Caco-2 (cell line): ENCODE measurements at regions of chr22 and their contacts with region 1.

Region 1: GRCh38 chr22:30205281-30206115 is 41.1 kb downstream of the LIF start:
- DNase-seq: peak; percentile 43 to 48
- H3K4me3 ChIP-seq: no peak overlapping the region
- H3K4me3 Mint-ChIP-seq: no peak overlapping the region
- H3K27ac Mint-ChIP-seq: peak overlapping the region; percentile 97
- H3K4me1 ChIP-seq: peaks cover 56% of the 10 kb centered on the region
- H3K4me1 Mint-ChIP-seq: peaks cover 45% of the 10 kb centered on the region
- H3K27me3 ChIP-seq: no peaks in the 10 kb centered on the region
- H3K27me3 Mint-ChIP-seq: no peaks in the 10 kb centered on the region
- CTCF ChIP-seq: no peak

Region 2: DNA sequence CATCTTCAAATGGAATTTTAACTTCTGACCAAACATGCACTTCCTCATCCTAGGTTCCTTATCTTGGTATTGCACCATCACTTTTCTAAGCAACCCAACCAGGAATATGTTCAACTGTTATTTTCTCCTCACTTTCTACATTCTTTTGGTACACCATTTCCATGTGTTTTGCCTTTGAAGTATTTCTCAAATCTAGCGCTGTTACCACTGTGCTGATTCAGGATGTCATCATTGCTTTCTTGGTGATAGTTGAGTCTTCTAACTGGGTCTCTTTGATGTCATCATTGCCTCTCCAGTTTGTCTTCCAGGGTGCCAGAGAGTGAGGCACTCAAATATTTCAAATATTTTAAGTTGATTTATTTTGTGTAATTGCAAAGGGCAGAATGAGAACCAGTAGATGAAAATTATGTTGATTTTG is 77.7 kb before region 1 on chr22:
- CTCF ChIA-PET with region 1: no interaction called
- POLR2A ChIA-PET with region 1: no interaction called
- intact Hi-C with region 1: loop called (anchors 1 kb)
- DNase-seq: peak in 1 of 2 experiments; percentile 27
- H3K4me3 ChIP-seq: no peak overlapping the region
- H3K4me3 Mint-ChIP-seq: no peak overlapping the region
- H3K27ac Mint-ChIP-seq: no peak overlapping the region
- H3K4me1 ChIP-seq: peaks cover 10% of the 10 kb centered on the region
- H3K4me1 Mint-ChIP-seq: no peaks in the 10 kb centered on the region
- H3K27me3 ChIP-seq: no peaks in the 10 kb centered on the region
- H3K27me3 Mint-ChIP-seq: no peaks in the 10 kb centered on the region
- CTCF ChIP-seq: no peak

Region 3: GRCh38 chr22:30217698-30218560 is 12.4 kb after region 1 on chr22:
- CTCF ChIA-PET with region 1: no interaction called
- POLR2A ChIA-PET with region 1: no interaction called
- intact Hi-C with region 1: no loop called
- DNase-seq: no peak
- H3K4me3 ChIP-seq: no peak overlapping the region
- H3K4me3 Mint-ChIP-seq: no peak overlapping the region
- H3K27ac Mint-ChIP-seq: peak overlapping the region; percentile 67
- H3K4me1 ChIP-seq: peaks cover 19% of the 10 kb centered on the region
- H3K4me1 Mint-ChIP-seq: peaks cover 25% of the 10 kb centered on the region
- H3K27me3 ChIP-seq: no peaks in the 10 kb centered on the region
- H3K27me3 Mint-ChIP-seq: no peaks in the 10 kb centered on the region
- CTCF ChIP-seq: no peak

Region 4: GRCh38 chr22:30245985-30246901 is 40.7 kb after region 1 on chr22 and contains the start of gene LIF:
- CTCF ChIA-PET with region 1: interaction called, 4 read pairs
- POLR2A ChIA-PET with region 1: no interaction called
- intact Hi-C with region 1: loop called (anchors 2 kb)
- DNase-seq: peak in 1 of 2 experiments; percentile 56
- H3K4me3 ChIP-seq: peak within 1 kb of the TSS; percentile 64
- H3K4me3 Mint-ChIP-seq: peak within 1 kb of the TSS; percentile 85
- H3K27ac Mint-ChIP-seq: peak within 1 kb of the TSS; percentile 62
- H3K4me1 ChIP-seq: peaks cover 40% of the 10 kb centered on the region
- H3K4me1 Mint-ChIP-seq: peaks cover 25% of the 10 kb centered on the region
- H3K27me3 ChIP-seq: no peaks in the 10 kb centered on the region
- H3K27me3 Mint-ChIP-seq: no peaks in the 10 kb centered on the region
- CTCF ChIP-seq: peak in 1 of 2 experiments; percentile 20
- total RNA-seq, gene LIF: 8.0 and 9.7 TPM in 2 replicates

Region 5: DNA sequence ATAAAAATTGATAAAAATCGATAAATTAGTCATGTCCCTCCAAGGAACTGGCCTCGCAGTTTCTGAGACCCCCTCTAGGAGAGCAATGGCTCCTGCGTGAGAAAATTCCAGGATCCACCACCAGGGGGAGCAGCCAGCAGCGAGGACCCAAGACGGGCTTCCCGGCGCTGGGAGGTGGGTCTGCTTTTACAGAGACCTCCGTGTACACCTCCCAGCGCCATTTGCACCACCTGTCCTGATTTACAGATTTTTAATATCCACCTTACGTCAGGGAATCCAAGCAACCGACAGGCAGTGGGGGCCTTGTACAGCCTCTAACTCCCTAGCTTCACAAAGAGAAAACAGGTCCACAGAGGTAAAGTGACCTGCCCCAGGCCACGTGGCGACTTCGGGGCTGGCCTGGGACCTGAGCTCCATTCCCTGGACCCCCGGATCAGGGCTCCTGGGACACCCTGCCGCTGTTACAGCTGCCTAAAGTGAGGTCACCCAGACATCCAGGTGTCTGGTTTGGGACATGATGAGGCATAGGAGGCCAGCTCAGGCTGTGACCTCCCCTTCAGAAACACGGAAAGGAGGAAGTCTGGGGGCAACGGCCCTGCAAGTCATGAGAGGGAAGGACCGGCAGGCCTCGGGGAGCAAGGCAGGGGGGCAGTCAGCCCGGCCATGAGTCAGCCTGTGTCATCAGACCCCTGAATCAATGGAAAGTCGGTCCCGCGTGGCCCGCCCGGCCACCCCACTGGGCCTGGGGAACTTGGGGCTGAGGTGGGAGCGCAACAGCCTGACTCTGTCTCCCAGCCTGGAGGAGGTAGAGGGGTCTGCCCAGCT is 57.6 kb after region 1 on chr22:
- CTCF ChIA-PET with region 1: no interaction called
- POLR2A ChIA-PET with region 1: no interaction called
- intact Hi-C with region 1: no loop called
- DNase-seq: peak; percentile 80 to 86
- H3K4me3 ChIP-seq: no peak overlapping the region
- H3K4me3 Mint-ChIP-seq: no peak overlapping the region
- H3K27ac Mint-ChIP-seq: no peak overlapping the region
- H3K4me1 ChIP-seq: peaks cover 13% of the 10 kb centered on the region
- H3K4me1 Mint-ChIP-seq: peaks cover 2% of the 10 kb centered on the region
- H3K27me3 ChIP-seq: no peaks in the 10 kb centered on the region
- H3K27me3 Mint-ChIP-seq: no peaks in the 10 kb centered on the region
- CTCF ChIP-seq: peak; percentile 95 to 98